Panc1 (cell line): ENCODE measurements at regions of chr6 and their contacts with region 1.

Region 1: DNA sequence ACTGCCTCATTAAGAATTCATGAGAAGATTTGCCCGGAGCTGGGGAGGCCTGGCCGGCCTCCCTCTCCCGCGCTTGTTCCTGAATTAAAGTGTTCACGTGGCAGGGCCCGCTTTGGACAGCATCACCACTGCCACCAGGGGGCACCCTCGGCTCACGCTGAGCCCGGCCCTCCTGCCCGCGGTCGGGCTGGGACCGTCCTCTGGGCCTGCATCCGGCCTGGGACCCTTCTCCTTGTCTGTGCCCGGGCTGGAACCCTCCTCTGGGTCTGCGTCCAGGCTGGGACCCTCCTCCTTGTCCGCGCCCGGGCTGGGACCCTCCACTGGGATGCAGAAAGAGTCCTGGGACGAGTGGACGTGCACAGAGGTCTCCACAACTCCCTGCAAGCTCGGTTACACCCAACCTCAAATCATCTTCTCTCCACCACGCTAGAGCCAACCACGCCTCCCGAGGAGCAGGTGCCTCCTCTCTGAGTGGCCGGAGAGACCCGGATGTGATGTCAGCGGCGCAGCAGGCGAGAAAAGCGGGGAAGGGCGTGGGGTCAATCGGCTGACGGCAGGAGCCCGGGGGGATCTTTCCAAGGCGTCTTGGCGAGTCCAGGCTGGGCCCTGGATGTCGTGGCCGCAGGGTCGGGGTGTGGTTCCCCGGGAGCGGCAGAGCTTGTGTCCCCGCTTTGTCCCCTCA is 50.9 kb upstream of the DACT2 start:
- DNase-seq: peak; percentile 24
- ATAC-seq: peak; percentile 98
- H3K4me3 ChIP-seq: no peak overlapping the region
- H3K27ac ChIP-seq: no peak overlapping the region
- H3K4me1 ChIP-seq: peaks cover 6% of the 10 kb centered on the region; the same call in 1 of the 2 replicates
- H3K27me3 ChIP-seq: no peaks in the 10 kb centered on the region; the same call in 1 of the 2 replicates
- CTCF ChIP-seq: peak; percentile 99

Region 2: GRCh38 chr6:168713834-168714233 is 343.4 kb after region 1 on chr6:
- CTCF ChIA-PET with region 1: no interaction called
- POLR2A ChIA-PET with region 1: no interaction called
- in situ Hi-C with region 1: no loop called
- intact Hi-C with region 1: loop called (anchors 5 kb)
- DNase-seq: no peak
- ATAC-seq: peak; percentile 93
- H3K4me3 ChIP-seq: no peak overlapping the region
- H3K27ac ChIP-seq: no peak overlapping the region
- H3K4me1 ChIP-seq: no peaks in the 10 kb centered on the region
- H3K27me3 ChIP-seq: peaks cover 18% of the 10 kb centered on the region
- CTCF ChIP-seq: peak; percentile 83